ENCODE measurements at regions of chr1 and their contacts with region 1.

Region 1: DNA sequence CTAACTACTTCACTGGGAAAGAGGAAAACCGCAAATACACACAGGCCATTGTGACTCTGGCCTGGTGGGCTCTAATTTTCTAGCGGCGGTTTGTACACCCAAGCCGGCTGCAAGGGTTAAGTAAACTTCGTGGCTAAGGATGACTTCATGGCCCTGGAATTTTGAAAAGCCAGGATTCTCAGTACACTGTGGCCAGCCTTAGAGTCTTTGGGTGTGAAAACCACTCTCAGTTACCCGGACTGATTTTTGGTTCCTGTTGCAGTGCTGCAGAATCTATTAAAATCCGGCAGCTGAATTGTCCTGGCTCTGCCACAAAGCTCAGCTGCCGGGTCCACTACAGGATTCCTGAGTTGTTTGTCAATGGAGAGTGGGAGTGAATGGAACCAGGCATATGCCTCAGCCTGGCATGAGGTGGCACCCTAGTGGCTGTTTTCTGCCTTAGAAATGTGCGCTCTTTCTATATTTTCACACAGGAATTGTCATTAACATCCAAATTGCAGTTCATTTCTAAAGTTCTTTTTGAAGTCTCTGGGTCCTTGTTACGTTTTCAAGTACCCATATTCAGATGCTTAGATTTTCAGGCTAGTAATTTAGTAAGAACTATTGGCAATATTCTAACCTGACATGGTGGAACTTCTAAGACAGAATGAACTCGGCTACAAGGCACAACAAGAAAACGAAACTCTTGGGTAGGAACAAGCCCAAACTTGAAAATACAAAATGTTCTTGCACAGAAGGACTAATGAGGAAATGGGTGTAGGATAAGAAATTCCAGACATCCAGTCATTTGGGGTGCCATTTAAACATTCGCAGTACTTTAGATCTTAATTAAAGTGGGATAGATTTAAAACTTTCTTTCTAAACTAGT is 255.9 kb downstream of the NFIA start:
- DNase-seq: peak; percentile 93
- H3K4me3 ChIP-seq: peak overlapping the region in 1 of 3 experiments; percentile 49
- H3K27ac ChIP-seq: peak overlapping the region; percentile 93
- H3K4me1 ChIP-seq: peaks cover 27% of the 10 kb centered on the region
- H3K27me3 ChIP-seq: no peaks in the 10 kb centered on the region
- CTCF ChIP-seq: peak; percentile 71 to 77
- POLR2A ChIP-seq: no peak

Region 2: DNA sequence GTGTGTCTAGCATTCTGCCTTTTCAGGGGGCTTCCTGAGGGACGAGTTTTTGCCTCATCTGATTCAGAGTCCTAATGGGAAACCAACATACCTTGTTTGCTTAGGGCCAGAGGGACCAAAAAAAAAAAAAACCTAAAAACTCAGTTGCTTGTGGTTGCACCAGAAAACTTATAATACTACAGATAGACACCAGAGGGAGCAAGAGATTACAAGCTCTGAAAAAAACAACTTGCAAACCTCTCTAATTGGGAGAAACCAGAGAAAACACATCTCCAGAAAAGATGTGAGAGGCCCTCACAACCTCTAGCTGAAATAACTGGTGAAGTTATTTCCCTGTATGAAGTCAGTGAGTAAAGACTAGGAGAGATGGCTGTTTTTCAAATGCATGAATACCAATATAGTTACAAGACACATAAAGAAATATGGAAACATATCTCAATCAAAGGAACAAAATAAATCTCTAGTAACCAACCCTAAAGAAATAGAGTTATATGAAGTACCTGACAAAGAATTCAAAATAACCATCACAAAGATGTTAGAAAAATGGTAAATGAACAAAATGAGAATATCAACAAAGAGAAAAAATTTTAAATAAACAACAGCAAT is 489.5 kb before region 1 on chr1:
- CTCF ChIA-PET with region 1: interaction called, 5 read pairs
- POLR2A ChIA-PET with region 1: no interaction called
- dilution Hi-C with region 1: no loop called
- intact Hi-C with region 1: loop called (anchors 2 kb)
- DNase-seq: peak; percentile 79
- H3K4me3 ChIP-seq: no peak overlapping the region
- H3K27ac ChIP-seq: no peak overlapping the region
- H3K4me1 ChIP-seq: no peaks in the 10 kb centered on the region
- H3K27me3 ChIP-seq: no peaks in the 10 kb centered on the region
- CTCF ChIP-seq: peak; percentile 35 to 45
- POLR2A ChIP-seq: no peak

Region 3: GRCh38 chr1:61056573-61057439 is 281.4 kb before region 1 on chr1:
- CTCF ChIA-PET with region 1: interaction called, 10 read pairs
- POLR2A ChIA-PET with region 1: no interaction called
- dilution Hi-C with region 1: no loop called
- intact Hi-C with region 1: no loop called
- DNase-seq: peak; percentile 74
- H3K4me3 ChIP-seq: peak overlapping the region; percentile 69 to 77 (median 75)
- H3K27ac ChIP-seq: peak overlapping the region; percentile 45
- H3K4me1 ChIP-seq: peaks cover 8% of the 10 kb centered on the region
- H3K27me3 ChIP-seq: no peaks in the 10 kb centered on the region
- CTCF ChIP-seq: no peak
- POLR2A ChIP-seq: no peak

Region 4: DNA sequence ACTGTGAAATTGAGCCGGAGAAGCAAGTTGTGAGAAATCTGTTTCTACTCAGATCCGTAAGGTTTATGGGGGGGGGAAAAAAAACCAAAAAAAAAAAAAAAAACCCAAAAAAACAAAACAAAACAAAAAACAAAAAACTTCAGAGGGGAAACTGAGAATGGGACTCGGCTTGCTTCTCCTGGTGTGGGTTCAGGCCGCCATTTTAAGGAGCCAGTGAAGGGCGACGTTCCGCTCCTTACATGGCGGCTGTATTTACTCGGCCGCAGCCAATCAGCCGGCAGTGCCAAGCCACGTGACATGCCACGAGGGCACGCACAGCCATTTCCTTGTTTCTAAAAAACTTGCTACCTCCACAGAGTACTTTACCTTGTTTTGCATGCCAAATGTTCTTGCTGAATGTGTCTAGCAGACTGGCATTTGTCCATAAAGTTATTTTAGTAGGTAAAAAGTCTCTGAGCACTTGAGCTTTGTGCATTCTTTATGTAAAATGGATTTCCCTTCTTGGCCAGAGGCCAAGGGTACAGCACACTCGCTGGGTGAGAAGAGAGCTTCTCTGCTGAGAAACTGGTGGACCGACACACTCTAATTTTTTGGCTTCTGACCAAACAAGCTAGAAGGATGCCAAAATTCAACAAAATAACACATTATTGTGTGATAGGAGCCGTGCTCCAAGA is 154.0 kb before region 1 on chr1:
- CTCF ChIA-PET with region 1: interaction called, 8 read pairs
- POLR2A ChIA-PET with region 1: no interaction called
- dilution Hi-C with region 1: no loop called
- intact Hi-C with region 1: loop called (anchors 2 kb)
- DNase-seq: peak; percentile 97
- H3K4me3 ChIP-seq: peak overlapping the region in 2 of 3 experiments; percentile 12 to 42
- H3K27ac ChIP-seq: peak overlapping the region; percentile 14
- H3K4me1 ChIP-seq: peaks cover 27% of the 10 kb centered on the region
- H3K27me3 ChIP-seq: no peaks in the 10 kb centered on the region
- CTCF ChIP-seq: no peak
- POLR2A ChIP-seq: peak; percentile 14

Region 5: GRCh38 chr1:61352845-61353435 is 14.7 kb after region 1 on chr1:
- CTCF ChIA-PET with region 1: interaction called, 7 read pairs
- POLR2A ChIA-PET with region 1: no interaction called
- dilution Hi-C with region 1: no loop called
- intact Hi-C with region 1: loop called (anchors 1 kb)
- DNase-seq: no peak
- H3K4me3 ChIP-seq: no peak overlapping the region
- H3K27ac ChIP-seq: no peak overlapping the region
- H3K4me1 ChIP-seq: peaks cover 18% of the 10 kb centered on the region
- H3K27me3 ChIP-seq: no peaks in the 10 kb centered on the region
- CTCF ChIP-seq: no peak
- POLR2A ChIP-seq: no peak

Region 6: DNA sequence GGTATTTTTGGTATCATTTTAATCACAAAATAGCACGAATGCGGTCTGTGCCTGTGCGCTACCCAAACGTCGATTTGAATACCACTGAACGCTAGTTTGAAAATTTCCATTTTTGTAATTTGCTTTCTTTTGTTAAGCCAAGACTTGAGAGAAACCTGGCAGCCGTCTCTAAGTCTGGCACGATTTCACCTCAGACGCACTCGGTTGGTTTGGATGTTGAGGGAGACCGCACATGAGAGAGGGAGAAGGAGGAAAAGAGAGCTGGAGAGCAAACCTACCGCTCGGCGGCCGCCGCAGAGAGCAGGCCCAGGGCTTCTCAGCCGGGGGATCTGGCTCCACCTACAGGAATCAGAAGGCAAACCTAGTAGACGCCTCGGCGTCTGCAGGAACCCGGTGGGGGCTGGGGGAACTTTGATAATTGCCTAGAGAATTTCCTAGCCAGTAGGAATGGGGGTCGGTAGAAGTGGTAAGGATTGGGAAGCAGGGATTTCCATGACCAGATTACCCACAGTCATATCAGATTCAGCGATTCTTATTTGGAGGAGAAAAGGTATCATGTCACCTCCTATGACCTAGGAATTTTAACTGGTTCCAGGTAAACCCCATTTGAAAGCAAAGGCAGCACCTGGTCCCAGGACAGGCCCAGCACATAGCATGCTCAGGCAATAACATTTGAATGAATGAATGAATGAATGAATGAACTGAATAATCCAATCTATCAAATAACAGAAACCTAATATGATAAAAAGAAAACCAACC is 303.5 kb after region 1 on chr1:
- CTCF ChIA-PET with region 1: interaction called, 3 read pairs
- POLR2A ChIA-PET with region 1: no interaction called
- dilution Hi-C with region 1: no loop called
- intact Hi-C with region 1: loop called (anchors 1 kb)
- DNase-seq: peak; percentile 75
- H3K4me3 ChIP-seq: peak overlapping the region in 1 of 3 experiments; percentile 37
- H3K27ac ChIP-seq: no peak overlapping the region
- H3K4me1 ChIP-seq: peaks cover 7% of the 10 kb centered on the region
- H3K27me3 ChIP-seq: no peaks in the 10 kb centered on the region
- CTCF ChIP-seq: peak; percentile 60 to 90
- POLR2A ChIP-seq: no peak

Region 7: GRCh38 chr1:62589321-62589720 is 1251.1 kb after region 1 on chr1:
- CTCF ChIA-PET with region 1: no interaction called
- POLR2A ChIA-PET with region 1: no interaction called
- dilution Hi-C with region 1: no loop called
- intact Hi-C with region 1: no loop called
- DNase-seq: no peak
- H3K4me3 ChIP-seq: no peak overlapping the region
- H3K27ac ChIP-seq: no peak overlapping the region
- H3K4me1 ChIP-seq: no peaks in the 10 kb centered on the region
- H3K27me3 ChIP-seq: no peaks in the 10 kb centered on the region
- CTCF ChIP-seq: no peak
- POLR2A ChIP-seq: no peak